ENCODE measurements at regions of chr10 and their contacts with region 1.

Region 1: GRCh38 chr10:87861953-87862678 is 1.2 kb downstream of the KLLN start:
- DNase-seq: peak; percentile 98
- ATAC-seq: peak; percentile 72
- H3K4me3 ChIP-seq: peak overlapping the region; percentile 73
- H3K27ac ChIP-seq: peak overlapping the region; percentile 76
- H3K4me1 ChIP-seq: no peaks in the 10 kb centered on the region
- H3K27me3 ChIP-seq: no peaks in the 10 kb centered on the region
- CTCF ChIP-seq: no peak
- POLR2A ChIP-seq: peak; percentile 18; the same call in 1 of the 2 replicates
- RAD21 ChIP-seq: peak; percentile 2; the same call in 1 of the 2 replicates

Region 2: DNA sequence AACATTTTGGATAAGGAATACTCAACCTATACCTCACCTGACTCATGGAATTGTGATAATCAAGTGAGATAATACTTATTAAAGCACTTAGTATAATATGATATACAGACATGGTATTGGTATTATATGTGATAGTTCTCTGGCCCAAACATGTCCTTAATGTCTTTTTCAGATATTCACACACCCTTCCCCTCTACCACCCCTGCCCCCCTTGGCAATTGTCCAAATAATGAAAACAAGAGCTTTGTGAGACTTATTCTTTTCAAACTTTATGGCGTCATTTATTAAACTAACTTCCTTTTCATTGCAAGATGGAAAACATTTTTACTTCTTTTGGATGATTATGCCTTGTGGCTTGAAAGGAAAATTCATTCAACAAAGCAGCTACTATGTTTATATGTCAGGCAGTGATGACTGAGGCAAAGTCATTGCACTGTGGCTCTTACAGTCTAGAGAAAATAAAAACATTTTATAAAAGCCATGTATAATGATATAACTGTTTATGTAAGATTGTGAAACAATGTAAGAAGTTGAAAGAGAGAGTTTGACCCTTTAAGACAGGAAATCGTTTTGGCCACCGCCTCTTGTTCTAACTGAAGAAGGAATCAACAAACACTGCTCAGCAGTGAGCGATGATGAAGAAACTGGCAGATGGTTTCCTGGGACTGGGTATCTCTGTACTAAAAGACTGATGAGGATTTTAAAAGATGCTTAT is 330.1 kb before region 1 on chr10:
- CTCF ChIA-PET with region 1: interaction called, 3 read pairs
- POLR2A ChIA-PET with region 1: no interaction called
- dilution Hi-C with region 1: no loop called
- in situ Hi-C with region 1: no loop called
- intact Hi-C with region 1: loop called (anchors 5 kb)
- DNase-seq: peak; percentile 79
- ATAC-seq: peak; percentile 85
- H3K4me3 ChIP-seq: no peak overlapping the region
- H3K27ac ChIP-seq: no peak overlapping the region
- H3K4me1 ChIP-seq: peaks cover 3% of the 10 kb centered on the region; the same call in 1 of the 2 replicates
- H3K27me3 ChIP-seq: no peaks in the 10 kb centered on the region
- CTCF ChIP-seq: no peak
- POLR2A ChIP-seq: no peak
- RAD21 ChIP-seq: no peak

Region 3: GRCh38 chr10:87931836-87932230 is 69.7 kb after region 1 on chr10:
- CTCF ChIA-PET with region 1: no interaction called
- POLR2A ChIA-PET with region 1: no interaction called
- dilution Hi-C with region 1: no loop called
- in situ Hi-C with region 1: no loop called
- intact Hi-C with region 1: loop called (anchors 5 kb)
- DNase-seq: peak; percentile 60
- ATAC-seq: 0 out of 2 replicates have a peak, but pooled peaks have one; percentile 9
- H3K4me3 ChIP-seq: no peak overlapping the region
- H3K27ac ChIP-seq: no peak overlapping the region
- H3K4me1 ChIP-seq: peaks cover 3% of the 10 kb centered on the region; the same call in 1 of the 2 replicates
- H3K27me3 ChIP-seq: no peaks in the 10 kb centered on the region
- CTCF ChIP-seq: no peak
- POLR2A ChIP-seq: no peak
- RAD21 ChIP-seq: no peak

Region 4: DNA sequence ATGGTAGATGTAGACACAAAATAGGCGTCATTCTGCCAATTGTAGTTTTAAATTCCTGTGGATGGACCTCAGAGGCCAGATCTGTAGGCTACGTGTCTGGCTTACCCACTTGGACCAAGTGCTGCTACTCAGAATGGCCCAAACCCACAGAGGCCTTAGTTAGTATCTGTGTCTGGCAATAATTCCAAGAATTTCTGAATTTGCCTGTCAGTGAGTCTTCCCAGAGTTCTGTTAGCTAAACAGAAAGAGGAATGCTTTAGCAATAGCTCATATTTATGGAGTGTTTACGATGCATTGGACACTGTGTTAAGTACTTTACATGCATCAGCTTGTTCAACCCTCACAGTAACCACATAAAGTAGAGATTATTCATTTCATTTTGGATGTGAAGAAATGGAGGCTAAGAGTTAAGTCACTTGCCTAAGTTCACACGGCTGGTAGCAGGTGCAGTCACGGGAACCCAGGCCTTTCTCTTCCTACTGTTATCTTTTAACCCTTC is 233.2 kb after region 1 on chr10:
- CTCF ChIA-PET with region 1: no interaction called
- POLR2A ChIA-PET with region 1: no interaction called
- dilution Hi-C with region 1: no loop called
- in situ Hi-C with region 1: no loop called
- intact Hi-C with region 1: loop called (anchors 5 kb)
- DNase-seq: peak; percentile 89
- ATAC-seq: peak; percentile 97
- H3K4me3 ChIP-seq: no peak overlapping the region
- H3K27ac ChIP-seq: 0 out of 2 replicates have a peak overlapping the region, but pooled peaks have one; percentile 9
- H3K4me1 ChIP-seq: peaks cover 4% of the 10 kb centered on the region
- H3K27me3 ChIP-seq: peaks cover 3% of the 10 kb centered on the region; the same call in 1 of the 2 replicates
- CTCF ChIP-seq: no peak
- POLR2A ChIP-seq: no peak
- RAD21 ChIP-seq: no peak

Region 5: GRCh38 chr10:88157981-88158465 is 295.9 kb after region 1 on chr10:
- CTCF ChIA-PET with region 1: no interaction called
- POLR2A ChIA-PET with region 1: interaction called, 4 read pairs
- dilution Hi-C with region 1: no loop called
- in situ Hi-C with region 1: no loop called
- intact Hi-C with region 1: loop called (anchors 1 kb)
- DNase-seq: peak; percentile 96
- ATAC-seq: peak; percentile 73
- H3K4me3 ChIP-seq: no peak overlapping the region
- H3K27ac ChIP-seq: peak overlapping the region; percentile 83
- H3K4me1 ChIP-seq: peaks cover 21% of the 10 kb centered on the region
- H3K27me3 ChIP-seq: no peaks in the 10 kb centered on the region
- CTCF ChIP-seq: no peak
- POLR2A ChIP-seq: no peak
- RAD21 ChIP-seq: no peak

Region 6: DNA sequence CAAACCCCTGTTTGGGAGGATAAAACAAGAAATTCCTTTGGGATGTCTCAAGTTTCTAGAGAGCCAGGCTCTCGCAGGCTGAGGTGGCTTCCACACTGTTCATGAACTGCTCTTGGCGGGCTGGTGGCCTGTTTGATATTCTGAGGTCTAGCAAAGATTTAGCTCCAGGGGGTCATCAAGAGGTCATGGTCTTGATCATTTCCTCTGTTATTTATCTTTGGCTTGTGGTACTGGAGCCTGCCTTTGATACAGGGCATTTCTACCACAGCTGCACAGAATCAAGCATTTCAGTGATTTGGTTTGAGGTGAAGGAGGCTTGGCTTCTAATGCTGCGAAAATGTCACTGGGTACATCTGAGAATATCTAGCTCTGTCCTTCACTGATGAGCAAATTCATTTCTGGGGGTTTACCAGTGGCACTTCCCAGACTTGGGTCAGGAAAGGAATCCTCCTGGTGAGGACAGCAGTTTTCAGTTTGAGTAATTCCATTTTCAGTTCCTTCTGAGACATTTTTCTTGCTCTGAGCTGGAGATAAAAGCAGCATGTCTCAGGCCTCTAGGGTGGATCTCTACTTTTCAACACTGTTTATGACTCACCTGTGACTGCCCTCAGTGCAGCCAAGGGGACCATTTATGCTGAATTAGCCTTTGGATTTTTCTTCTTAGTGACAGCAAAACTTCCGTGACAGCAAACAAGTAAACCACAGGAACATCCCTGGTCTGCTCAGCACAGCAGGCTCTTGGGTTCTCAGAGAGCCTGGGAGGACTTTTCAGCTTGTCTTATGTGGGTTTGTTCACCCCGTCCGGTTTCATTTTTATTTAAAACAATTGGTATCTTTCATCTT is 409.0 kb after region 1 on chr10:
- CTCF ChIA-PET with region 1: no interaction called
- POLR2A ChIA-PET with region 1: no interaction called
- dilution Hi-C with region 1: no loop called
- in situ Hi-C with region 1: no loop called
- intact Hi-C with region 1: loop called (anchors 10 kb)
- DNase-seq: peak; percentile 71
- ATAC-seq: peak; percentile 87
- H3K4me3 ChIP-seq: no peak overlapping the region
- H3K27ac ChIP-seq: peak overlapping the region; percentile 15; the same call in 1 of the 2 replicates
- H3K4me1 ChIP-seq: peaks cover 15% of the 10 kb centered on the region
- H3K27me3 ChIP-seq: no peaks in the 10 kb centered on the region
- CTCF ChIP-seq: no peak
- POLR2A ChIP-seq: no peak
- RAD21 ChIP-seq: no peak

Region 7: GRCh38 chr10:88553116-88553752 is 691.1 kb after region 1 on chr10:
- CTCF ChIA-PET with region 1: no interaction called
- POLR2A ChIA-PET with region 1: no interaction called
- dilution Hi-C with region 1: no loop called
- in situ Hi-C with region 1: loop called (anchors 5 kb)
- intact Hi-C with region 1: loop called (anchors 1 kb)
- DNase-seq: peak; percentile 84
- ATAC-seq: peak; percentile 96
- H3K4me3 ChIP-seq: no peak overlapping the region
- H3K27ac ChIP-seq: no peak overlapping the region
- H3K4me1 ChIP-seq: no peaks in the 10 kb centered on the region; the same call in 1 of the 2 replicates
- H3K27me3 ChIP-seq: no peaks in the 10 kb centered on the region
- CTCF ChIP-seq: peak; percentile 79
- POLR2A ChIP-seq: no peak
- RAD21 ChIP-seq: peak; percentile 88

Measured in IMR-90 (cell line).